ENCODE measurements at regions of chr21 and their contacts with region 1.

Region 1: GRCh38 chr21:16071092-16071491 is 341.3 kb downstream of the USP25 start:
- DNase-seq: peak; percentile 54 to 92 (median 84)
- H3K4me3 ChIP-seq: peak overlapping the region; percentile 18 to 77 (median 62)
- H3K27ac ChIP-seq: peak overlapping the region; percentile 79 to 99 (median 97)
- H3K27me3 ChIP-seq: no peaks in the 10 kb centered on the region
- CTCF ChIP-seq: no peak

Region 2: DNA sequence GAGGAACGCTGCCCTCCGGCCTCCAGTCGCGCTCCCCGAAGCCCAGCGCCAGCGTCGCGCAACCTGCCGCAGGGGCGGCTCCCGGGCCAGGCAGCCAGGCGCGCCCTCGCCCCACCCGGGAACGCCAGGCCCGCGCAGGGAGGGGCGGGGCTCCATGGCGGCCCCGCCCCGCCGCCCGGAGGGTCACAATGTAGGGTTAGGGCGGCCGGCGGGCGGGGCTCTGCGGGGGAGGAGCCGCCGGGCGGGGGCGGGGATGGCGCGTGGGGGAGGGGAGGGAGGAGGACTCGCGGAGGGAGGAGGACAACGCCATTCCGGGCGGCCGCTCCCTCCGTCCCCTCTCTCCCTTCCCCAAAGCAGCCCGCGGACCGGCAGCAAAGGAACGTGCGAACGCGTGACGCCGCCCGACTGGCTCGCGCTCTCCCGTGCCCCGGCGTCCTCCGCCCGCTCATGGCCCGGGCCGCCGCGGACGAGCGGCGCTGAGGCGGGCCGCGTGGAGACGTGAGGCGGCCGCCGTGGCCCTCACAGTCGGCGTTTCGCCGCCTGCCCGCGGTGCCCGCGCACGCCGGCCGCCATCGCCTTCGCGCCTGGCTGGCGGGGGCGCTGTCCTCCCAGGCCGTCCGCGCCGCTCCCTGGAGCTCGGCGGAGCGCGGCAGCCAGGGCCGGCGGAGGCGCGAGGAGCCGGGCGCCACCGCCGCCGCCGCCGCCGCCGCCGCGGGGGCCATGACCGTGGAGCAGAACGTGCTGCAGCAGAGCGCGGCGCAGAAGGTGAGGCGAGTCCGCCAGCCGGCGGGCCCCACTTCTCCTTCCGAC is 341.2 kb before region 1 on chr21 and contains the start of gene USP25:
- intact Hi-C with region 1: loop called in 1 of 2 experiments (anchors 5 kb)
- DNase-seq: peak; percentile 74 to 89 (median 80)
- H3K4me3 ChIP-seq: peak within 1 kb of the TSS; percentile 59 to 95 (median 81)
- H3K27ac ChIP-seq: peak within 1 kb of the TSS; percentile 76 to 97 (median 92)
- H3K27me3 ChIP-seq: no peaks in the 10 kb centered on the region
- CTCF ChIP-seq: peak in 23 of 56 donors; percentile 4 to 67 (median 32)
- total RNA-seq, gene USP25: 29.2 to 77.2 (median 56.4) TPM

Region 3: GRCh38 chr21:15820852-15821379 is 250.2 kb before region 1 on chr21:
- intact Hi-C with region 1: no loop called
- DNase-seq: no peak
- H3K4me3 ChIP-seq: no peak overlapping the region
- H3K27ac ChIP-seq: no peak overlapping the region
- H3K27me3 ChIP-seq: no peaks in the 10 kb centered on the region
- CTCF ChIP-seq: no peak

Region 4: DNA sequence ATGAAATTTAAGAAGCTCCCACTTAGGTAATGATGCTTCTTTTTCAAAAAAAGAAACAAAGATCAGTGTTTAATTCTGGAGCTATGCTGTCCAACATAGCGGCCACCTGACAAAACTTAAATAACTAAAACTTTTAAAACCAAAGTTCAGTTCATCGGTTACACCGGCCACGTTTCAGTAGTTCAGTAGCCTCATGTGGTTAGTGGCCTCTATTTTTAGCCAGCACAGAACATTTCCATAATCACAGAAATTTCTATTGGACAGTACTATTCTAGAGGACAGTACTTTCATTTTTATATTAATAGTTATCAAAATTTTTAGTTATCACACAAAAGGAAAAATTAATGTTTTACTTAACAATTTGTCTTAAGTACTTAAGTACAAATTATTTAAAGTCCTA is 200.3 kb before region 1 on chr21:
- intact Hi-C with region 1: no loop called
- DNase-seq: no peak
- H3K4me3 ChIP-seq: no peak overlapping the region
- H3K27ac ChIP-seq: no peak overlapping the region
- H3K27me3 ChIP-seq: no peaks in the 10 kb centered on the region
- CTCF ChIP-seq: no peak

Region 5: GRCh38 chr21:16002874-16003466 is 68.1 kb before region 1 on chr21:
- intact Hi-C with region 1: loop called in 1 of 2 experiments (anchors 10 kb)
- DNase-seq: no peak
- H3K4me3 ChIP-seq: no peak overlapping the region
- H3K27ac ChIP-seq: no peak overlapping the region
- H3K27me3 ChIP-seq: no peaks in the 10 kb centered on the region
- CTCF ChIP-seq: peak in 55 of 56 donors; percentile 40 to 80 (median 64)

Region 6: GRCh38 chr21:16124378-16125130 is 53.5 kb after region 1 on chr21:
- intact Hi-C with region 1: no loop called
- DNase-seq: no peak
- H3K4me3 ChIP-seq: no peak overlapping the region
- H3K27ac ChIP-seq: peak overlapping the region in 6 of 59 donors; percentile 8 to 38 (median 14)
- H3K27me3 ChIP-seq: no peaks in the 10 kb centered on the region
- CTCF ChIP-seq: no peak

Region 7: GRCh38 chr21:16308269-16308668 is 237.2 kb after region 1 on chr21:
- intact Hi-C with region 1: loop called in 1 of 2 experiments (anchors 2 kb)
- DNase-seq: no peak
- H3K4me3 ChIP-seq: peak overlapping the region; percentile 15 to 67 (median 52)
- H3K27ac ChIP-seq: peak overlapping the region; percentile 54 to 93 (median 88)
- H3K27me3 ChIP-seq: no peaks in the 10 kb centered on the region
- CTCF ChIP-seq: no peak

Region 8: GRCh38 chr21:16420031-16420724 is 349.1 kb after region 1 on chr21:
- intact Hi-C with region 1: loop called in 1 of 2 experiments (anchors 10 kb)
- DNase-seq: peak in 2 of 10 donors; percentile 41 to 53
- H3K4me3 ChIP-seq: peak overlapping the region; percentile 13 to 68 (median 50)
- H3K27ac ChIP-seq: peak overlapping the region; percentile 28 to 95 (median 84)
- H3K27me3 ChIP-seq: no peaks in the 10 kb centered on the region
- CTCF ChIP-seq: peak in 1 of 56 donors; percentile 3

Region 9: GRCh38 chr21:16534408-16535101 is 463.5 kb after region 1 on chr21:
- intact Hi-C with region 1: loop called in 1 of 2 experiments (anchors 5 kb)
- DNase-seq: peak in 9 of 10 donors; percentile 39 to 71 (median 57)
- H3K4me3 ChIP-seq: peak overlapping the region; percentile 12 to 78 (median 61)
- H3K27ac ChIP-seq: peak overlapping the region; percentile 83 to 98 (median 95)
- H3K27me3 ChIP-seq: no peaks in the 10 kb centered on the region
- CTCF ChIP-seq: peak in 1 of 56 donors; percentile 10

Region 10: DNA sequence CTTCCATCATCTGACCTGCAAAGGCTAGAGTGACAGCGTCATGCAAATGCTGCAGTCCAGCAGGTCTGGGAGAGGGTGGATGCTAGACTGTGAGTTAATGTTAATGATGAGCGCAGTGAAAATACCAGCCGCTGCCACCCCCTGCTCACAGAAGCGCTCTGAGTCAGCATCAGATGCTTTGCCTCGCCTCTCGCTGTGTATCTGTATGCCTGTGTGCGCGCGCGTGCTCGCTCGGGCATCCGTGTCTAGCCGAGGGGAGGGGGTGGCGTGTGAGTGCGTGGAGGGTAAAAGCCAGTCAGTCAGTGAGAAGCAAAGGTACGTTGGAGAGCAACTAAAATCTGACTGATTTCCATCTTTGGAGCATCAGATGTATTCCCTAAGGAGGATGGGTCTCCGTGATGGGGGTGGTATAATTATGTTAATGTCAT is 517.4 kb after region 1 on chr21:
- intact Hi-C with region 1: loop called (anchors 5 kb)
- DNase-seq: peak; percentile 78 to 95 (median 93)
- H3K4me3 ChIP-seq: peak overlapping the region; percentile 25 to 74 (median 59)
- H3K27ac ChIP-seq: peak overlapping the region; percentile 40 to 98 (median 96)
- H3K27me3 ChIP-seq: no peaks in the 10 kb centered on the region
- CTCF ChIP-seq: peak in 5 of 56 donors; percentile 7 to 29 (median 11)